Left cardiac atrium (tissue), 4 donors: ENCODE measurements at regions of chr13 and their contacts with region 1.

Region 1: GRCh38 chr13:30673669-30674521 is 56.2 kb downstream of the USPL1 start:
- DNase-seq: peak; percentile 90
- ATAC-seq: peak; percentile 95 to 96

Region 2: GRCh38 chr13:30985637-30986205 is 311.8 kb after region 1 on chr13:
- intact Hi-C with region 1: no loop called
- DNase-seq: no peak
- ATAC-seq: no peak

Region 3: GRCh38 chr13:31044377-31045285 is 370.7 kb after region 1 on chr13:
- intact Hi-C with region 1: loop called in 1 of 2 experiments (anchors 10 kb)
- DNase-seq: peak; percentile 81
- ATAC-seq: peak; percentile 85 to 89